Pancreas (tissue), 10 donors: ENCODE measurements at regions of chr19 and their contacts with region 1.

Region 1: GRCh38 chr19:3945838-3946237 is 13.0 kb downstream of the NMRK2 start:
- DNase-seq: no peak
- ATAC-seq: no peak
- H3K4me3 ChIP-seq: no peak overlapping the region
- H3K27ac ChIP-seq: no peak overlapping the region
- H3K4me1 ChIP-seq: peaks cover 0 to 3% (median 0%) of the 10 kb centered on the region in 3 donors
- H3K27me3 ChIP-seq: no peaks in the 10 kb centered on the region
- CTCF ChIP-seq: no peak

Region 2: GRCh38 chr19:3931041-3931440 is 14.8 kb before region 1 on chr19:
- intact Hi-C with region 1: loop called in 1 of 3 experiments (anchors 1 kb)
- DNase-seq: peak in 4 of 6 donors; percentile 28 to 71 (median 69)
- ATAC-seq: peak; percentile 54 to 97 (median 74)
- H3K4me3 ChIP-seq: no peak overlapping the region
- H3K27ac ChIP-seq: no peak overlapping the region
- H3K4me1 ChIP-seq: peaks cover 0 to 3% (median 0%) of the 10 kb centered on the region in 3 donors
- H3K27me3 ChIP-seq: peaks cover 0 to 3% (median 0%) of the 10 kb centered on the region in 4 donors
- CTCF ChIP-seq: no peak

Region 3: GRCh38 chr19:4115050-4115817 is 169.4 kb after region 1 on chr19:
- intact Hi-C with region 1: no loop called
- DNase-seq: no peak
- ATAC-seq: peak in 2 of 4 donors; percentile 20 to 21
- H3K4me3 ChIP-seq: no peak overlapping the region
- H3K27ac ChIP-seq: no peak overlapping the region
- H3K4me1 ChIP-seq: no peaks in the 10 kb centered on the region
- H3K27me3 ChIP-seq: no peaks in the 10 kb centered on the region
- CTCF ChIP-seq: no peak